Cardiac septum (tissue), 1 donor: ENCODE measurements at regions of chr17 and their contacts with region 1.

Region 1: GRCh38 chr17:63946440-63947367 is 14.6 kb upstream of the CD79B start:
- DNase-seq: peak; percentile 87

Region 2: GRCh38 chr17:63798572-63799106 is 148.1 kb before region 1 on chr17:
- intact Hi-C with region 1: no loop called
- DNase-seq: no peak

Region 3: DNA sequence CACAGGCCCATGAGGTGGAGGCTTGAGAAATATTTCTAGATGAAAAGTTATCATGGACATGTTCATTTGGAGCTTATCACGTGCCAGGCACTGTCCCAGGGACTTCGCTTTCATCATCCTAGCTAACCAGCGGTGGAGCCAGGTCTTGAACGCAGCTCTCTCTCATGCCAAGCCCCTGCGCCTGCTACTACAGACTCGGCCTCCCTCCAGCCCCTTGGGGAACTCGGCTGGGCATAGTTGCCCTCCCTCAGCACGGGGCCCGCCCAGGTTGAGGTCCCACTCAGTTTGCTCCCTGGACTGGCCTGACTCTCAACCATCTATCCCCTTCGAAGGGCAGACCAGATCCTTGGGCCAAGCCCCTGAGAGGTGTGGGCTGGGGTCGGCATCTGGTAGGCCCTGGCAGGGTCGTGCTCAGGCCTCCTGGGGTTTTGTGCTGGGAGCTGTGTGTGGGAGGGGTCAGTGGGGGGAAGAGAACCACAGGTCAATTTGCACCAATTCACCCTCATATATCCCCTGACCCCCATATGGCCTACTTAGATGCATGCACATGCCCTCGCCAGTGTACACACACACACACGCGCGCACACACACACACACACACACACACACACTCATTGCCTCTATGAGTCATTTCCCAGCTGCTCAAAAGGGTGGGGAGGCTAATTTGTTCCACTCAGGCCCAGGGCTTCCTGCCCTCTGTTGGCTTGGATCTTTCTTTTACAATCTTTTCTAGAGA is 38.1 kb after region 1 on chr17:
- intact Hi-C with region 1: loop called (anchors 5 kb)
- DNase-seq: no peak